Breast epithelium (tissue), 4 donors: ENCODE measurements at regions of chr6 and their contacts with region 1.

Region 1: GRCh38 chr6:134446218-134446848 is 128.4 kb upstream of the SGK1 start:
- DNase-seq: no peak
- H3K4me3 ChIP-seq: no peak overlapping the region
- H3K27ac ChIP-seq: no peak overlapping the region
- H3K4me1 ChIP-seq: no peaks in the 10 kb centered on the region
- H3K27me3 ChIP-seq: no peaks in the 10 kb centered on the region
- CTCF ChIP-seq: no peak
- POLR2A ChIP-seq: no peak

Region 2: DNA sequence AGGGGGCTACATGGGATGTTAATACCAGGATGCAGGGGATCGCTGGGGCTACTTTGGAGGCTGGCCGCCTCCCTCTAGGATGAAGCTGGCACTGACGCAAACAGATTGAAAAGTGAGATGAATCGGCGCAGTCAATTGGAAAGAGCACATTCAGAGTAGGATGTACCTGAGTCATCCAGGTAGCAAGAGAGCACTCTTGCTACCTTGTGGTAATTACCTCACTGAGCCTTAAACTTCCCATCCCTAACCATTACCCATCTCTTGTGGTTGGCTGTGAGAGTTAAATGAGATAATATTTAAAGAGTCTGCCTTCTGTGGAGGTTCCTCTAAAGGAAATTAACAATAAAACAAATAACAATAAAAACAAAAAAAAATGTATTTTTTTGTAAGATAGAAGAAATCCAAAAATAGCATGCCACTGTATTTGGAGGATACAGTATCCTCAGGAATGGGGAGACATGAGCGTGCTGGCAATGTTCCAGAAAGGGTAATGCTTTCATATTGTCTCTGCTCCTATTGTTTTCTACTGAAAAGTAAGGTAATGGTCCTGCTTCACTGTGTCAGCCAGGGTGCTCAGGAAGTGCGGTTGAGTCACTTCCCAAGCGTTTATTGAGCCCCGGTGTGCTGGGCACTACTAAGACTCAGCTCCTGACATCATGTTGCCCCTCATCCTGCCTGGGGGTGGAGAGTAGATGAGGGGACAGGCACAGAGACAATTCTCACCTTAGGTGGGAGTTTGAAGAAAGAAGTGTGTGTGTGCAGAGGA is 904.1 kb before region 1 on chr6:
- intact Hi-C with region 1: no loop called
- DNase-seq: no peak
- H3K4me3 ChIP-seq: no peak overlapping the region
- H3K27ac ChIP-seq: no peak overlapping the region
- H3K4me1 ChIP-seq: no peaks in the 10 kb centered on the region
- H3K27me3 ChIP-seq: no peaks in the 10 kb centered on the region
- CTCF ChIP-seq: no peak
- POLR2A ChIP-seq: no peak

Region 3: DNA sequence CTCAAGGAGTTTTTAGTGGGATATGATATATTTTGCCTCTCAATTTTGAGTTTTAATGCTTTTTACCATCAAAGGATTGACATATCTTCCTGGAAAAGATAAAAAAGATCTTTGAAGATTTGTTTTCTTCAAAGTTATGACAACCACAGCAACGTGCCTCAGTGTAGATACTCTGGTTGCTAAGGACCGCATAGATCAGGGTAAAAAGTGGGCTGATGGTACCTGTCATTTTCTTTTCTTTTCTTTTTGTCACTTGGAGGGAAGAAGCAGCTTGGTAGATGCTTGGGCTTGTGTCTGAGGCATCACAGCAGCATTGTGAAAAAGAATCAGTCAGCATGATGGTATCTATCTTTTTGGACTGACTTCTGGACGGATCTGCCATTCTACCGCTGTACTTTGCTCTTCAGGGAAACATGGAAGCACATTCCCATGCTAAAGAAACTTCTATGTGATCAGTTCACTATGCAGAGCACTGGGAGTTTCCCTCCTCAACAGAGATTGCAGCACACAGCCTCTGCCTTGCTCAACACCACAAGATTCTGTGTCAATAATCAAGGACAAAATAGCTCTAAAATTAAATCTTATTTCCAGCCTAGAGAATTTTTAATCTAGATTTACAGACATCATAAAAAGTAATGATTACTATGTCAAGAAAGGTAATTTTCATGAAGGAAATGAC is 73.6 kb before region 1 on chr6:
- intact Hi-C with region 1: loop called (anchors 2 kb)
- DNase-seq: no peak
- H3K4me3 ChIP-seq: no peak overlapping the region
- H3K27ac ChIP-seq: no peak overlapping the region
- H3K4me1 ChIP-seq: no peaks in the 10 kb centered on the region
- H3K27me3 ChIP-seq: no peaks in the 10 kb centered on the region
- CTCF ChIP-seq: no peak
- POLR2A ChIP-seq: no peak

Region 4: GRCh38 chr6:134882426-134883038 is 436.2 kb after region 1 on chr6:
- intact Hi-C with region 1: no loop called
- DNase-seq: peak; percentile 26 to 62
- H3K4me3 ChIP-seq: no peak overlapping the region
- H3K27ac ChIP-seq: no peak overlapping the region
- H3K4me1 ChIP-seq: no peaks in the 10 kb centered on the region
- H3K27me3 ChIP-seq: no peaks in the 10 kb centered on the region
- CTCF ChIP-seq: peak; percentile 74 to 98 (median 96)
- POLR2A ChIP-seq: no peak